Activated CD4-positive, alpha-beta T cell treated with anti-CD3 and anti-CD28 coated beads for 36 hours (primary cell): ENCODE measurements at regions of chr17 and their contacts with region 1.

Region 1: GRCh38 chr17:48678141-48678971 is 44.0 kb downstream of the PRAC1 start:
- DNase-seq: peak; percentile 84
- ATAC-seq: peak; percentile 92
- H3K4me3 Mint-ChIP-seq: no peak overlapping the region
- H3K27ac Mint-ChIP-seq: no peak overlapping the region
- H3K4me1 Mint-ChIP-seq: no peaks in the 10 kb centered on the region
- H3K27me3 Mint-ChIP-seq: peaks cover 34% of the 10 kb centered on the region

Region 2: DNA sequence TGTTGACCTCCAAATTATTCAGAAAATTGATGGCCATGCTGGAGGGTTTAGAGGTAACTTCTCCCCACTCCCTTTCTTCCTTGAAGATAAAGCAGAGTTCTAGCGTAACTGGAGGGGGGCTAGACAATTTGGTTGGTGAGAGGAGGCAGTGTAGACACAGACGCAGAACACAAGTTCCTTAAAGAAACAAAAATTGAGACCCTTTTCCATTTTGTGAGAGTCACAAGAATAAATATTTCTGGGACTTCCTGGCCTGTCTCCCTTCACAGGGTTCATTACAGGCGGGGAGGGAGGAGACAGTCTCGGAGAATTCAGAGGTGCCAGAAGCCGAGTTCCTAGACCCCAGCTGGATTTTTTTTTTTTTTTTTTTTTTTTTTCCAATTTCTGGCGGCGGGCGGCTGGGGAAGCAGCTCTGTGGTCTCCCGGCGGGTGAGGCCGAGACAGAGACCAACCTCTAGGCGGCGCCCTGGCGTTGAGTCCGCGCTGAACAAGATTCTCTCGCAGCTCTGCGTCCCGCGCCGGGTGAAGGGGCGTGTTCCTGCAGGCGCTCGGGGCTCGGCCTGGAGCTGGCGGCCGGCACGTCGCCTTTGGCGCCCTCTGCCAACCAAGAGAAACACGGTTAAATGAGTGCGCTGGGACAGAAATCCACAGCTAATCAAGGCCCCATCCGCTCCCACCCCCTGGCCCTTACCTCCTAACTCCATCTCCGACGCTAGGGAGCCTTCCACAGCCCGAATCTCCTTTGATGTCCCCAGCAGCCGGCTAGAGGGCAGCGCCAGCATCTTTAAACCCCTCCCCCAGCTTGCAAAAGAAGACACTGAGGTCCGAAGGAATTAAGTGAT is 42.0 kb before region 1 on chr17:
- CTCF ChIA-PET with region 1: interaction called, 13 read pairs
- POLR2A ChIA-PET with region 1: no interaction called
- intact Hi-C with region 1: no loop called
- DNase-seq: peak; percentile 91
- ATAC-seq: peak; percentile 95
- H3K4me3 Mint-ChIP-seq: no peak overlapping the region
- H3K27ac Mint-ChIP-seq: no peak overlapping the region
- H3K4me1 Mint-ChIP-seq: no peaks in the 10 kb centered on the region
- H3K27me3 Mint-ChIP-seq: peaks cover 74% of the 10 kb centered on the region

Region 3: GRCh38 chr17:48690655-48691054 is 12.3 kb after region 1 on chr17:
- CTCF ChIA-PET with region 1: interaction called, 31 read pairs
- POLR2A ChIA-PET with region 1: no interaction called
- intact Hi-C with region 1: no loop called
- DNase-seq: no peak
- ATAC-seq: no peak
- H3K4me3 Mint-ChIP-seq: no peak overlapping the region
- H3K27ac Mint-ChIP-seq: no peak overlapping the region
- H3K4me1 Mint-ChIP-seq: no peaks in the 10 kb centered on the region
- H3K27me3 Mint-ChIP-seq: peaks cover 10% of the 10 kb centered on the region

Region 4: GRCh38 chr17:48718761-48719641 is 40.6 kb after region 1 on chr17:
- CTCF ChIA-PET with region 1: interaction called, 40 read pairs
- POLR2A ChIA-PET with region 1: no interaction called
- intact Hi-C with region 1: loop called (anchors 2 to 5 kb)
- DNase-seq: peak; percentile 34
- ATAC-seq: no peak
- H3K4me3 Mint-ChIP-seq: peak overlapping the region; percentile 40
- H3K27ac Mint-ChIP-seq: no peak overlapping the region
- H3K4me1 Mint-ChIP-seq: peaks cover 25% of the 10 kb centered on the region
- H3K27me3 Mint-ChIP-seq: peaks cover 75% of the 10 kb centered on the region

Region 5: DNA sequence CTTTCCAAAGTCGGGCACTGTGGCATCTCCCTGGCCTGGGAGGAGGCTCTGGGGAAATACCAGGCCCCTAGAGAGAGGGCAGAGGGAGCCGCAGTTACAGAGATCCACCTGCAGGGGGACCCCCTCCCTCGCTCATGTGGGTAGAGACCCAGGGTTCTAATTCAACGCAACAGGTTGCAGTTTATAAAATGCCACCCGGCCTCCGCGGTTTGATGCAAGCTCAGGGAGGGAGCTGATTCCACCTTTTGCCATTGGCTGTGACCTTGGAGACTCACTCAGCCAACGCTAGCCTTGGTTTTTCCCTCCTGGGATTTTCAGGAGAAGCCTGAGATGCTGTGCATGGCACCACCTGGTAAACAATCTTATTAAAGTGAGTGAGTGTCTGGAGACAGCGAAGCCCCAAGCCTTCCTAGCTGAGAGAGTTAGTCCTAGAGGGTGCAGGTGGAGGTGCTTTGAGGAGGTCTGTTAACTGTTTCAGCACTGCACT is 126.6 kb after region 1 on chr17:
- CTCF ChIA-PET with region 1: interaction called, 28 read pairs
- POLR2A ChIA-PET with region 1: no interaction called
- intact Hi-C with region 1: no loop called
- DNase-seq: peak; percentile 82
- ATAC-seq: peak; percentile 78
- H3K4me3 Mint-ChIP-seq: no peak overlapping the region
- H3K27ac Mint-ChIP-seq: no peak overlapping the region
- H3K4me1 Mint-ChIP-seq: peaks cover 2% of the 10 kb centered on the region
- H3K27me3 Mint-ChIP-seq: peaks cover 9% of the 10 kb centered on the region

Region 6: DNA sequence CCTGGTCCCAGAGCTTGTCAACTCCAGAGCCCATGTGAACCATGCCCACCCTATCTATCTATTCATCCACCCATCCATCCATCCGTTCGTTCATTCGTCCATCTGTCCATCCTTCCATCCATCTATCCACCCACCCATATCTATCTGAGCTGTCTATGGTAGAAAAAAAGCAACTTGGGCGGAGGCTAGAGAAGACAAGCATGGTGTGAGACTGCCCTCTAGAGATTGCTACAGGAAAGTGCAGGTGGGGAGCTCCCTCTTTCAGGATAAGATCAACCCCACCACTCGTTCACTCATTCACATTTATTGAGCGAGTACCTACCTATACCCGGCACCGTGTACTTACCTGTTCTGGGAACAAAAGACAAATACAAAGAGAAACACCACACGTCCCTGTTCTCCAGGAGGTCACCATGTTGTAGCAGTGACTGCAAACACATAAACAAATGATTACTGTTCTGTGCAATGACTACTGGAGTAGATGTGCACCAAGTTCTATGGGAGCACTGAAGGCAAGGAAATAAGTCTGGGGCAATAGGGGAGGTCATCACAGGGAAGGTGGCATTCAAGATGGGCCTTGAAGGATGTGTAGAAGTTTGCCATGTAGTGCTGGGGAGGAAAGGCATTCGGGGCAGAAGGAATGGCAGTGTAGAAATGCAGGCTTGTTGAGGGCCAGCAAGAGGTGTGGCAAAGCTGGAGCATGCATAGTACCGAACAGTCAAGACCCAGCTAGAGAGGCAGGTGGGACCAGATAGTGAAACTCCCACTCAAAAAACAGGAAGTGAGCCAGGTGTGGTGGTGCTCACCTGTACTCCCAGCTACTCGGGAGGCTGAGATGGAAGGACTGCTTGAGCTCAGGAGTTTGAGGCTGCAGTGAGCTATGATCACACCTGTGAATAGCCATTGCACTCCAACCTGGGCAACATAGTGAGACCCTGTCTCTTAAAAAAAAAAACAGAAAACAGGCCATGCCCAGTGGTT is 200.9 kb after region 1 on chr17:
- CTCF ChIA-PET with region 1: interaction called, 70 read pairs
- POLR2A ChIA-PET with region 1: no interaction called
- intact Hi-C with region 1: loop called (anchors 1 to 2 kb)
- DNase-seq: peak; percentile 64
- ATAC-seq: peak; percentile 90
- H3K4me3 Mint-ChIP-seq: no peak overlapping the region
- H3K27ac Mint-ChIP-seq: no peak overlapping the region
- H3K4me1 Mint-ChIP-seq: no peaks in the 10 kb centered on the region
- H3K27me3 Mint-ChIP-seq: peaks cover 5% of the 10 kb centered on the region